ENCODE measurements at regions of chr5 and their contacts with region 1.

Region 1: GRCh38 chr5:140700177-140701144 is at the start of gene ZMAT2:
- H3K4me3 ChIP-seq: peak within 1 kb of the TSS; percentile 59
- H3K27ac ChIP-seq: no peak within 1 kb of the TSS
- H3K4me1 ChIP-seq: 0 out of 2 replicates have a peak, but pooled peaks cover 2% of the 10 kb centered on the region
- CTCF ChIP-seq: no peak

Region 2: DNA sequence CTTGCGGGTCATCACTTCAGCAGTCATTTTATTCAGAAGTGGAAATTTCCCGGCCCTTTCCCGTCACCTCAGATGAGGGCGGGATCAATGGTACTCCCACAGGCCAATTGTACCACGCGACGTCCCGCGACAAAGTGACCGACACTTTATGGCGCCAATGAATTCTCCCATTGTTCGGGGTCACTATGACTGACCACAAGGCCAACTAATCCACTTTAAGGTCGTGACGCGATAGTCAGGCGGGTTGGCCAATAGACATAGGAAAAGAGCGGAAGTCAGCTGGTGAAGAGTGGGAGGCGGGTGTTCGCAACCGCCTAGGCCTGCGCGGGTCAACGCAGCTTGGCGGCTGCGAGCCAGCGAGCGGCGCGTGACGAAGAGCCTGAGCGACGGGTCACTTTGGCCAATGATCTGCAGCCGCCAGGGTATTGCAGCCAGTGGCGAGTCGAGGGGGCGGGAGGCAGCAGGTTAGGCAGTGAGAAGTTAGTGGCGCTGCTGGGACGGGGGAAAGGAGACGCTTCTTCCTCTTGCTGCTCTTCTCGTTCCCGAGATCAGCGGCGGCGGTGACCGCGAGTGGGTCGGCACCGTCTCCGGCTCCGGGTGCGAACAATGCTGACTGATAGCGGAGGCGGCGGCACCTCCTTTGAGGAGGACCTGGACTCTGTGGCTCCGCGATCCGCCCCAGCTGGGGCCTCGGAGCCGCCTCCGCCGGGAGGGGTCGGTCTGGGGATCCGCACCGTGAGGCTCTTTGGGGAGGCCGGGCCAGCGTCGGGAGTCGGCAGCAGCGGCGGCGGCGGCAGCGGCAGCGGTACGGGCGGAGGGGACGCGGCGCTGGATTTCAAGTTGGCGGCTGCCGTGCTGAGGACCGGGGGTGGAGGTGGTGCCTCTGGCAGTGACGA is 298.9 kb before region 1 on chr5 and contains the start of gene ANKHD1:
- CTCF ChIA-PET with region 1: no interaction called
- POLR2A ChIA-PET with region 1: interaction called, 11 read pairs
- H3K4me3 ChIP-seq: peak within 1 kb of the TSS; percentile 98
- H3K27ac ChIP-seq: peak within 1 kb of the TSS; percentile 91
- H3K4me1 ChIP-seq: peaks cover 8% of the 10 kb centered on the region; the same call in 1 of the 2 replicates
- CTCF ChIP-seq: peak; percentile 64; the same call in 1 of the 2 replicates

Region 3: DNA sequence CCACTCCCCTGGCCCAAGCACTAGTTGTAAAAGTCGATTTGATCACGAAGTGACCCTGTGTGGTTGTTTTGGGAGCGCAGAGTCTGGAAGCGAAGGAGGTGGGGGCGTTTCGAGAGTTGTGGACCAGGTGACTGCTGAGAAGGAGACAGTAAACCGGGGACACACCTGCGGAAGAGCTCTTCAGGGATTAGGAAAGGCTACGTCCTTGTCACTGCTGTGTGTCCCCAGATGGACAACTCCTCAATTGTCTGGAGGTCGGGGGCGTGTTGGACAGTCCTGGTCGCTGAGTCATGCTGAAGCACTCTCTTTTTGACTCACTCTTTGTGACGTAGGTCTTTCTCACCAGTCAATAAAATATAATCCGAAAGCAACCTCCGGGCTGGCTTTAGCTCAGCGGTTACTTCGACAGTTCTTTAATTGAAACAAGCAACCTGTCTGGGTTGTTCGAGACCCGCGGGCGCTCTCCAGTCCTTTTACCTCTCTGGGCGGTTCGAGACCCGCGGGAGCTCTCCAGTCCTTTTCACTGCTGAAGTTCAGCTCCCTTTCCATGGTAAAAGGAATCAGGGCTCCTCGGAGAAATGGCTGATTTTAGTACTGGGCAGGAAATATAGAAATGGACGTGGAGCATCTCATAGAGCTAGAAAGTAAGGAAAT is 10.6 kb after region 1 on chr5:
- CTCF ChIA-PET with region 1: no interaction called
- POLR2A ChIA-PET with region 1: interaction called, 21 read pairs
- H3K4me3 ChIP-seq: peak overlapping the region; percentile 56
- H3K27ac ChIP-seq: peak overlapping the region; percentile 50
- H3K4me1 ChIP-seq: no peaks in the 10 kb centered on the region
- CTCF ChIP-seq: no peak

Measured in HEK293 (cell line).